CD14-positive monocyte (primary cell): ENCODE measurements at regions of chr3 and their contacts with region 1.

Region 1: DNA sequence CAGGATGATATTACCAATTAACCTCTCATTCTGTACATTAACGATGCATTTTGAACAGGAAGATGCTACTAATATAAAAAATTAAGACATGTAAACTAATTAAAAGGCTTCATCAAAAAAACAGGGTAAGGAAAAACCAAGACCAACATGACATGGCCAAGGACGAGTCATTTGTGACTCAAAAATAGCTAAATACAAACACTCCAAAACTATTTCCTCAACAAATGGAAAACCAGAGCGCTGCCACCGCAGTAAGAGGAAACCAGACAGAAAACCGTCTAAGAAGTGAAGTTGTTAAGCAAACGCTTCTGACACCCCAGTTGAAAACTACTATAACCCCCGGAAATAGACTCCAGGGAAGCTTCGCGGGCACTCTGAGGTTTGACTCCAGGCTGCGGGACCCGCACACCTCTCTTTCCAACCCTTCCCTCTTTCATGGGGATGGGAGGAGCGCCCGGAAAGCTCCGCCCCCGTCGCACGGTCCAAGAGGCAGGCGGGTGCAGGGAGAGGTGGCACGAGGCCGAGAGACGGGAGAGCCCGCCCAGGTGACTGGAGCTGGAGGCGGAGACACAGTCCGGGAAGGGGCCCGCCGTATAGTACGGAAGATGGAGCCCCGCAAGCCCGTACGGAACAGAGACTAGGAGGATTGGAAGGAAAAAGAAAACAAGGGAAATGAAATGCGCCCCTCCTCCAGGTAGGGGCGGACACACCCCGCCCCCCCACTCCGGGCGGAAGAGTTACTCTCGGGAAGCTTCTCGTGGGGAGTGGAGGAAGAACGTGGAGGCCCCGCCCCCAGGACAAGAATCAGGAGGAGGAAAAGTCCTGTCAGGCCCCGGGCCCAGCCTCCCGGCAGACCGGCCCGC is 708 bp downstream of the DCAF1 start:
- DNase-seq: peak; percentile 67 to 78 (median 74)
- H3K4me3 ChIP-seq: peak overlapping the region; percentile 80 to 82 (median 80)
- H3K4me3 Mint-ChIP-seq: peak overlapping the region; percentile 86 to 96
- H3K27ac ChIP-seq: peak overlapping the region; percentile 84 to 91
- H3K27ac Mint-ChIP-seq: peak overlapping the region; percentile 95 to 98 (median 98)
- H3K4me1 ChIP-seq: peaks cover 10 to 23% of the 10 kb centered on the region in 2 donors
- H3K4me1 Mint-ChIP-seq: peaks cover 9% of the 10 kb centered on the region
- H3K27me3 ChIP-seq: no peaks in the 10 kb centered on the region
- H3K27me3 Mint-ChIP-seq: no peaks in the 10 kb centered on the region
- CTCF ChIP-seq: no peak

Region 2: DNA sequence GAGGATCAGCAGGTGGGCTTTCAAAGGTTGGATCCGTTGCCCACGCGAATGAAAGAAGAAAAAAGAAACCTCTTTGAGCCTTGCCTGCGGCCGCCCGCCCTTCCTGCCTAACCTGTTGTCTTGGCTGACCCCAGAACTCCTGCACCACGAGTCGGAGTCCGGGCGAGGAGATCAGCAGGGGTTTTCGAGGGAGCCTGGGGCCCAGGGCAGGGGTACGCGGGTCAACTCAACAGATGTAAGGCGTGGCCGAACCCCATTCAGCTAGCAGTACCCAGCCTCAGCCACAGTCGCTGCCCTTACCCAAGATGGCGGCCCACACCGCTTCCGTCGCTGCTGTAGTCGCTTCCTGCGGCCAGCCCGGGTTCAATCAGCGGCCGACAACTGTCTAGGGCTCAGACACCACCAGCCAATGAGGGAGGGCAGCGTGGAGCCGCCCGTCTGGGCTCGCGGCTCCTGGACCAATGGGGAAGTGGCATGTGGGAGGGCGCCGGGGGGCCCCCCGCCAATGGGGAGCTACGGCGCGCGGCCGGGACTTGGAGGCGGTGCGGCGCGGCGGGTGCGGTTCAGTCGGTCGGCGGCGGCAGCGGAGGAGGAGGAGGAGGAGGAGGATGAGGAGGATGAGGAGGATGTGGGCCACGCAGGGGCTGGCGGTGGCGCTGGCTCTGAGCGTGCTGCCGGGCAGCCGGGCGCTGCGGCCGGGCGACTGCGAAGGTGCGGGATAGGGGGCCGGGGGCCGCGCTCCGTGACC is 114.2 kb before region 1 on chr3 and contains the start of gene MANF:
- intact Hi-C with region 1: loop called (anchors 2 to 5 kb)
- DNase-seq: peak; percentile 98
- H3K4me3 ChIP-seq: peak within 1 kb of the TSS; percentile 78 to 99 (median 83)
- H3K4me3 Mint-ChIP-seq: peak within 1 kb of the TSS; percentile 96 to 98
- H3K27ac ChIP-seq: peak within 1 kb of the TSS; percentile 64 to 97
- H3K27ac Mint-ChIP-seq: peak within 1 kb of the TSS; percentile 96 to 99 (median 97)
- H3K4me1 ChIP-seq: peaks cover 34 to 44% of the 10 kb centered on the region in 2 donors
- H3K4me1 Mint-ChIP-seq: peaks cover 38% of the 10 kb centered on the region
- H3K27me3 ChIP-seq: no peaks in the 10 kb centered on the region
- H3K27me3 Mint-ChIP-seq: peaks cover 0 to 3% (median 1%) of the 10 kb centered on the region in 3 donors
- CTCF ChIP-seq: no peak
- polyA plus RNA-seq, gene MANF: 14.1 to 30.2 (median 23.6) TPM

Region 3: DNA sequence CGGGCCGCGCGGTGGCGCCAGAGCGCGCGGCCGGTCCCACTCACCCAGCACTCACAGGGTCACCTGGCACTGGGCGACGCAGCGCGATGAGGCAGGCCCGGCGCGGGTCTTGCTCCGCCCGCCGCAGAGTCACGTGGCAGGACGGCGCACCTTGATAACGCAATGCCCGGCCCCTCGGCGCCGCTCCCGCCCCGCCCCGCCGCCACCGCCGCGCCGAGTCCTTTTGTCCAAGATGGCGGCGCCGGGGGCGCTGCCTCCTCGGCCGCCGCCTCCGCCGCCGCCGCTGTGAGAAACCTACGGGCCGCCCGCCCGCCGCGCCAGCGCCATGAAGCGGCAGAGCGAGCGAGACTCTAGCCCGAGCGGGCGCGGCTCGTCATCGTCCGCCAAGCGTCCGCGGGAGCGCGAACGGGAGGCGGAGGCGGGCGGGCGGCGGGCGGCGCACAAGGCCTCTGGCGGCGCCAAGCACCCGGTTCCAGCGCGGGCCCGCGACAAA is 108.0 kb before region 1 on chr3 and contains the start of gene RBM15B:
- intact Hi-C with region 1: loop called (anchors 2 to 5 kb)
- DNase-seq: peak; percentile 96 to 97 (median 97)
- H3K4me3 ChIP-seq: peak within 1 kb of the TSS; percentile 52 to 74 (median 62)
- H3K4me3 Mint-ChIP-seq: peak within 1 kb of the TSS; percentile 79 to 84
- H3K27ac ChIP-seq: peak within 1 kb of the TSS; percentile 41 to 72
- H3K27ac Mint-ChIP-seq: peak within 1 kb of the TSS; percentile 74 to 89 (median 84)
- H3K4me1 ChIP-seq: peaks cover 38 to 50% of the 10 kb centered on the region in 2 donors
- H3K4me1 Mint-ChIP-seq: peaks cover 59% of the 10 kb centered on the region
- H3K27me3 ChIP-seq: no peaks in the 10 kb centered on the region
- H3K27me3 Mint-ChIP-seq: peaks cover 0 to 2% (median 0%) of the 10 kb centered on the region in 3 donors
- CTCF ChIP-seq: peak; percentile 86
- polyA plus RNA-seq, gene RBM15B: 7.1 to 10.3 (median 9.1) TPM

Region 4: DNA sequence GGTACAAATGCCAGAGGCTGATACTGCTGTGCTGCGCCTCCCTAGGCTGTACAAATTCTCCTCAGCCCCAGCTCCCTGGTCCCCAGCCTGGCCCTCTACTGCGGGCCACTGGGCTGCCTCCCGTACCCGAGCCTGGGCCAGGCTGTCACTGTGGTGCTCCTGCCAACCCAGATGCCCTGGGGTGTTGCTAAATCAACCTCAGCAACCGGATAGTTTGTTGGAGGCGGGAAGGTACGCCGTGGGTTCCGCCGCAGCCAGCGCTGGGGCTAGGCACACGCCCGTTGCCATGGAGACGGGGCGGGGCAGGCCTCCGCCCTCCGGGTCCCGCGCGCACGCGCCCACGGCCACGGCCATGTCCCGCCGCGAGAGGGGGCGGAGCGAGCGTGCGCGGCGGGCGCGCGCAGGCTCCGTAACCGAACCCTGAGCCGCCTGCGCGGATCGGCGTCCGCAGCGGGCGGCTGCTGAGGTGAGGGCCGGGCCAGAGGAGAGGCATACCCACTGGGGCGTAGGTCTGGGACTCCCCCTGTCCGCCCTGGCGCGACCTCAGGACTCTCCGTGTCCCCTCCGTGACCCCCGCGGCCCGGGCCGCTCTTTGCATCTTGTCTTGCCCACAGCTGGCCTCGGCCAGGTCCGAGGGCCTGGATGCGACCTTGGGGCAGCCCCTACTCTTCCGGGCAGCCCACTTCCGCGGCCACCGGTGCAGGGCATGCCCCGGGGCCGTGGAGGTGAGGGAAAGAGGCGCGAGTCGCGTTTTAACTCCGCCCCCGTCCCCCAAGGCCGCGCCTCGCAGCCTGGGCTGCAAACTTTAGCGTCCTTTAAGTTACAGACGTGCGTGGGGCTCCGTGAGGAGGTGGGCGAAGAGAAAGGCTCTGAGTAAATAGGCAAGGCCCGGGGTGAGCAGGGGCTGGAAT is 172.0 kb after region 1 on chr3 and contains the start of gene TEX264:
- intact Hi-C with region 1: loop called in 1 of 2 experiments (anchors 2 kb)
- DNase-seq: peak; percentile 94 to 97 (median 95)
- H3K4me3 ChIP-seq: peak within 1 kb of the TSS; percentile 86 to 96 (median 95)
- H3K4me3 Mint-ChIP-seq: peak within 1 kb of the TSS; percentile 87 to 91
- H3K27ac ChIP-seq: peak within 1 kb of the TSS; percentile 87 to 89
- H3K27ac Mint-ChIP-seq: peak within 1 kb of the TSS; percentile 81 to 92 (median 89)
- H3K4me1 ChIP-seq: peaks cover 47 to 72% of the 10 kb centered on the region in 2 donors
- H3K4me1 Mint-ChIP-seq: peaks cover 77% of the 10 kb centered on the region
- H3K27me3 ChIP-seq: no peaks in the 10 kb centered on the region
- H3K27me3 Mint-ChIP-seq: no peaks in the 10 kb centered on the region
- CTCF ChIP-seq: no peak
- polyA plus RNA-seq, gene TEX264: 58.3 to 108 (median 80.8) TPM

Region 5: DNA sequence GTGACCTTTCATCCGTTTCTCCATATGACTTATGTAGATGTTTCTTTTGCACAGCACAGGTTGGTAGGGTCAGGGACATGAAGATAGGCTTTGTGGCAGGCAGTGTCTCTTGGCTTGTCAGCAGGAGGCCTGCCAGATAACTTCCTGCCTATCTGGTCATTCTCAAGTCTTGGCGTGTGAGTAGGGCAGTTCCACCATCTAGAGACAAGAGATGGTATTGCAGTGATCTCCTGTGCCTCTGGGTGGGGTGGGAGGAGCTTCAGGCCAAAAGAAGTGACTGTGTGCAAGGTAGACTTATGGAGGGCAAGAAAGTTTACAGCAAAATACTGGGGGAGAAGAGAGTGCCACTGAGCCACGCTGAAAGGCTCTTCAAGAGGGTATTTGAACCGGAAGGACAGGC is 183.0 kb after region 1 on chr3:
- intact Hi-C with region 1: loop called (anchors 1 to 5 kb)
- DNase-seq: peak; percentile 78 to 83 (median 81)
- H3K4me3 ChIP-seq: peak overlapping the region in 1 of 3 experiments; percentile 51
- H3K4me3 Mint-ChIP-seq: peak overlapping the region in 1 of 2 donors; percentile 72
- H3K27ac ChIP-seq: peak overlapping the region in 1 of 2 donors; percentile 55
- H3K27ac Mint-ChIP-seq: peak overlapping the region; percentile 58 to 90 (median 84)
- H3K4me1 ChIP-seq: peaks cover 42 to 56% of the 10 kb centered on the region in 2 donors
- H3K4me1 Mint-ChIP-seq: peaks cover 81% of the 10 kb centered on the region
- H3K27me3 ChIP-seq: no peaks in the 10 kb centered on the region
- H3K27me3 Mint-ChIP-seq: peaks cover 0 to 5% (median 3%) of the 10 kb centered on the region in 3 donors
- CTCF ChIP-seq: peak; percentile 91

Region 6: GRCh38 chr3:51799879-51800749 is 301.0 kb after region 1 on chr3:
- intact Hi-C with region 1: loop called in 1 of 2 experiments (anchors 10 kb)
- DNase-seq: peak; percentile 17 to 43 (median 39)
- H3K4me3 ChIP-seq: no peak overlapping the region
- H3K4me3 Mint-ChIP-seq: no peak overlapping the region
- H3K27ac ChIP-seq: no peak overlapping the region
- H3K27ac Mint-ChIP-seq: no peak overlapping the region
- H3K4me1 ChIP-seq: peaks cover 4 to 5% of the 10 kb centered on the region in 2 donors
- H3K4me1 Mint-ChIP-seq: peaks cover 4% of the 10 kb centered on the region
- H3K27me3 ChIP-seq: no peaks in the 10 kb centered on the region
- H3K27me3 Mint-ChIP-seq: peaks cover 11 to 23% (median 12%) of the 10 kb centered on the region in 3 donors
- CTCF ChIP-seq: peak; percentile 83